Heart right ventricle (tissue), 16 donors: ENCODE measurements at regions of chrX and their contacts with region 1.

Region 1: DNA sequence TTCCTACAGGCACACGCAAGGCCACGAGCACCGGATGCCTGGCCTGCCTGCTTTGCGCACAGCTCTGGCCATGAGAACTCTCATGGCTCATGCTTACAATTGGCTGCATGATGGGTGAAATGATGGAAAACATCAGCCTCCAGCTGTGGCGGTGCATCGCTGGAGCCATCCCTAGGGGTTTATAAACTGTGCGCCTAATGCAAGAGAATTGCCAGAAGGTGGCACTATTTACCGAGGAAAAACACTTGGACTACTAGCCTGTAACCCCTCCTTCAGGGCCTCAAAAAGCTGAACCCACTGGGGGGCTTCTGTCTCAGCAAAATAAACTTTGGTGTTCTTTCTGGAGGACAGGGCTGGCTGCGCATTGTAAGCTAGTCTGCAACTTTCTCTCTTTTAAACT is 51.9 kb downstream of the PHKA2 start:
- DNase-seq: peak in 1 of 2 donors; percentile 13
- ATAC-seq: peak in 7 of 8 donors; percentile 25 to 78 (median 39)
- H3K4me3 ChIP-seq: no peak overlapping the region
- H3K27ac ChIP-seq: no peak overlapping the region
- H3K4me1 ChIP-seq: no peaks in the 10 kb centered on the region
- H3K27me3 ChIP-seq: no peaks in the 10 kb centered on the region
- CTCF ChIP-seq: peak in 8 of 9 donors; percentile 9 to 55 (median 46)

Region 2: DNA sequence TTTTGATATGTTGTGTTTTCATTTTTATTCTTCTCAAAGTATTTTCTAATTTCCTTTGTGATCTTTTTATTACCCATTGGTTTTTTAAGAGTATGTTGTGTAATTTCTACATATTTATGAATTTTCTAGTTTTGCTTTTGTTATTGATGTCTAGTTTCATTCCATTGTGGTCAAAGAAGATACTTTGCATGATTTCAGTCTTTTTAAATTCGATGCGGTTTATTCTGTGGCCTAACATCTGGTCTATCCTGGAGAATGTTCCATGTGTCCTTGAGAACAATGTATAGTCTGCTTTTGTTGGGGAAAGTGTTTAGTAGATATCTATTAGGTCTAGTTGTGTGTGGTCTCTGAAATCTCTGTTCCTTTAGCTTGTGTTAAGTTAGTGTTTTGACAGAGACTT is 178.3 kb before region 1 on chrX:
- intact Hi-C with region 1: no loop called
- DNase-seq: no peak
- ATAC-seq: no peak
- H3K4me3 ChIP-seq: no peak overlapping the region
- H3K27ac ChIP-seq: no peak overlapping the region
- H3K4me1 ChIP-seq: peaks cover 0 to 5% (median 0%) of the 10 kb centered on the region in 9 donors
- H3K27me3 ChIP-seq: no peaks in the 10 kb centered on the region
- CTCF ChIP-seq: no peak

Region 3: GRCh38 chrX:19017271-19017670 is 85.3 kb after region 1 on chrX:
- intact Hi-C with region 1: loop called in 1 of 10 experiments (anchors 10 kb)
- DNase-seq: peak in 1 of 2 donors; percentile 7
- ATAC-seq: no peak
- H3K4me3 ChIP-seq: no peak overlapping the region
- H3K27ac ChIP-seq: no peak overlapping the region
- H3K4me1 ChIP-seq: no peaks in the 10 kb centered on the region
- H3K27me3 ChIP-seq: no peaks in the 10 kb centered on the region
- CTCF ChIP-seq: peak in 7 of 9 donors; percentile 36 to 54 (median 46)

Region 4: DNA sequence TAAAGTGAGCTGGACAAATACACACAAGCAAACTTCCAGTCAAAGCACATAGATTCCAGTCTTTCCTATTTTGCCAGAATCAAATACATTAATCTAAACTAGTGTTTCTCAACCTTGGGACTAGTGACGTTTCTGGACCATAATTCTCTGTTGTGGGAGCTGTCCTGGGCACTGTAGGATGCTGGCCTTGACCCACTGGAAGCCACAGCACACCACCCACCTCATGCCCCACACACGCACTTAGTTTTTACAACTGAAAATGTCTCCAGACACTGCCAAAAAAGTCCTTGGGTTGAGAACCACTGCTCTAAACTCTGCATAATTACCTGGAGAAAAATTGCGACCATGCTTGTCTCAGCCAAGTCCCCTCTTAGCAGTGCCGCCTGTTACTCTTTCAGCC is 525.7 kb after region 1 on chrX:
- intact Hi-C with region 1: no loop called
- DNase-seq: no peak
- ATAC-seq: no peak
- H3K4me3 ChIP-seq: no peak overlapping the region
- H3K27ac ChIP-seq: no peak overlapping the region
- H3K4me1 ChIP-seq: no peaks in the 10 kb centered on the region
- H3K27me3 ChIP-seq: peaks cover 0 to 11% (median 0%) of the 10 kb centered on the region in 7 donors
- CTCF ChIP-seq: no peak